Activated CD4-positive, alpha-beta T cell treated with anti-CD3 and anti-CD28 coated beads, Interleukin-2, amount 10 ng/mL, durations not matched to agents 24 days and 14 days (primary cell): ENCODE measurements at regions of chr4 and their contacts with region 1.

Region 1: GRCh38 chr4:98995183-98996055 is at the start of gene METAP1:
- DNase-seq: peak; percentile 98
- H3K4me3 Mint-ChIP-seq: peak within 1 kb of the TSS; percentile 89
- H3K27ac Mint-ChIP-seq: peak within 1 kb of the TSS; percentile 98
- H3K4me1 Mint-ChIP-seq: peaks cover 32% of the 10 kb centered on the region
- H3K27me3 Mint-ChIP-seq: peaks cover 3% of the 10 kb centered on the region
- total RNA-seq, gene METAP1: 61.2 and 63.3 TPM in 2 replicates

Region 2: DNA sequence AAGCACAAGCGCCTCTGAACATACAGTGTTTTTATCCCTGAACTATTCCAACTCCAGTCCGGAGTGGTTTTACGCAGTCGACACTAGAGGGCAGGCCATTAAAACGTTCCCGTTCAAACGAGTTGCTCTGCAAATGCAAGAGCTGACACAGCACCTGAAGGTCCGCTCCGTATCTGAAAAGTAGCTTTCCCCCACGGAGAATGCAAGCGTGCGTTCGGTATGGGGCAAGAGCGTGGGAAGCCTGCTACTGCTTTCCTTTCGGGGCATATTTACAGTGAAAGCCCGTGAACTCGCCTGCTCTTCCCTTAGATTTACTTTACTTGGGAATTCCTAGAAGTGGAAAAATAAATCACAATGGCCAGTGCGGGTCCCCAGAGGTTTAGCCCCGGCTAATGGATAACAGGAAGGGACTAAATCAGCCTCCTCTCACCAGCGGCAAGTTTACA is 527.8 kb before region 1 on chr4:
- intact Hi-C with region 1: loop called (anchors 1 kb)
- DNase-seq: peak; percentile 92
- H3K4me3 Mint-ChIP-seq: peak overlapping the region; percentile 79
- H3K27ac Mint-ChIP-seq: peak overlapping the region; percentile 38
- H3K4me1 Mint-ChIP-seq: peaks cover 33% of the 10 kb centered on the region
- H3K27me3 Mint-ChIP-seq: no peaks in the 10 kb centered on the region

Region 3: DNA sequence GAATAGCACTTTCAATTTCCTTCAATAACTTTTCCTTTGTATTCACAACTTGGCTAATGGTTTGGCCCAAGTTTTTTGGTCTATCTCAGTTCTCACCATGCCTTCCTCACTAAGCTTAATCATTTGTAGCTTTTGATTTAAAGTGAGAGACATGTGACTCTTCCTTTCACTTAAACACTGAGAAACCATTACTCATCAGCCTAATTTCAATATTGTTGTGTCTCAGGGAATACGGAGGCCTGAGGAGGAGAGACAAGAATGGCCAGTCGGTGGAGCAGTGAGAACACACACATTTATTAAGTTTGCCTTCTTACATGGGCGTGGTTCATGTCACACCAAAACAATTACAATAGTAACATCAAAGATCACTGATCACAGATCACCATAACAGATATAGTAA is 393.7 kb before region 1 on chr4:
- intact Hi-C with region 1: loop called (anchors 2 kb)
- DNase-seq: no peak
- H3K4me3 Mint-ChIP-seq: peak overlapping the region; percentile 72
- H3K27ac Mint-ChIP-seq: peak overlapping the region; percentile 95
- H3K4me1 Mint-ChIP-seq: peaks cover 54% of the 10 kb centered on the region
- H3K27me3 Mint-ChIP-seq: no peaks in the 10 kb centered on the region

Region 4: GRCh38 chr4:98745366-98745765 is 250.1 kb before region 1 on chr4:
- intact Hi-C with region 1: no loop called
- DNase-seq: no peak
- H3K4me3 Mint-ChIP-seq: no peak overlapping the region
- H3K27ac Mint-ChIP-seq: no peak overlapping the region
- H3K4me1 Mint-ChIP-seq: no peaks in the 10 kb centered on the region
- H3K27me3 Mint-ChIP-seq: no peaks in the 10 kb centered on the region

Region 5: DNA sequence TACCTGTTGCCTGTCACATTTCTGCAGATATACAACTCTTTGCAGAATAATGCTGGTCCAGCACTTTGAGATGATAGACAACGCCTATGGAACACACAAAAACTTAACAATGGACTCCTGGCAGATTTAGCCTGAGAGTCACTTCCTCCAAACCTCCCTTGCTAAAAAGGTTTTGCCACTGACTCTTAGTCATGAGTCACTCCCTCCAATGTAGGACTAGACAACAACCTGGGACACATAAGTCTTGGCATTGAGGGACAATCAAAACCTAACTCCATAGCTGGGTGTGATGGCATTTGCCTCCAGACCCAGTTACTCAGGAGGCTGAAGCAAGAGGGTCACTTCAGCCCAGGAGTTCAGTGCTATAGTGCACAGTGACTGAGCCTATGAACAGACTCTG is 44.5 kb before region 1 on chr4:
- intact Hi-C with region 1: no loop called
- DNase-seq: no peak
- H3K4me3 Mint-ChIP-seq: no peak overlapping the region
- H3K27ac Mint-ChIP-seq: no peak overlapping the region
- H3K4me1 Mint-ChIP-seq: no peaks in the 10 kb centered on the region
- H3K27me3 Mint-ChIP-seq: peaks cover 8% of the 10 kb centered on the region

Region 6: DNA sequence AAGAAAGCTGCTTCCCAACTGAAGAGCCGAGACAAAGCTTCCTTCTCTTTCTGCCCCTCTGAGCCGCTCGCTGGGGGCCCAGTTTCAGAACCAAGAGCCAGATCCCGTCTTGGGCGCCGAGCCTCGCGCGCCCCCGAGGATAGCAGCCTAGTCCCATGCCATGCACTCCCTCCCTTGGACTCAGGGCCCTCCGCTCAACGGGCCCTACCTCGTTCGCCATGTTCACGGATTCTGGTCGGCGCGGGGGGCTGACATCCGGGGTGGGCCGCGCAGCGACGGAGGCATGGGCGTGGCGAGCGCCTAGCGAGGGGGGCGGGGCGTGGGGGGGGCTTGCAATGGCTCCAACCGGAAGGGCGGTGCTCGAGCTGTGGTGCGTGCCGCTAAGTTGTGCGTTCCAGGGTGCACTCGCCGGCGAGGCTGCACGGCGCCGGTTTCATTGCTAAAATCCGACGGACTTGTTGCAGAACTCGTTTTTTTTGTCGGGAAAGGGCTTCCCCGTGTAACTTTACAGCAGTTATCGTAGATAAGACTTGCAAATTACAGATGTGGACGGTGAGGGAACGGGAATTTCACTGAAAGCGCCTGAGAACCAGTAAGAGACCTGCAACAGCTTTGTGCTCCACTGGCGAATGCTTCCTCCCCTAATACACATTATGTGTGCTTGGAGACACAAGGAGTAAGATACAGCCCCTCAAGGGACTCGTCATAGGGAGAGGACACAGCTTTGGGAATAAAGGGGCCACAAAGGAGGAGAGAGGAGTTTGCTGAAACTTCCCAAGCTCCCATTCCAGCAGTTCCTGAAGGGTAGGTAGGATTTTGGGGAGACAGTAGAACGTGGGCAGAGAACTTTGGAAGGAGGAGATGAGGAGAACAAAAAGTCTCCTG is 93.3 kb after region 1 on chr4 and contains the start of gene ADH5:
- intact Hi-C with region 1: loop called (anchors 1 kb)
- DNase-seq: peak; percentile 95
- H3K4me3 Mint-ChIP-seq: peak within 1 kb of the TSS; percentile 90
- H3K27ac Mint-ChIP-seq: peak within 1 kb of the TSS; percentile 96
- H3K4me1 Mint-ChIP-seq: peaks cover 35% of the 10 kb centered on the region
- H3K27me3 Mint-ChIP-seq: peaks cover 1% of the 10 kb centered on the region
- total RNA-seq, gene ADH5: 82.6 and 85.3 TPM in 2 replicates

Region 7: DNA sequence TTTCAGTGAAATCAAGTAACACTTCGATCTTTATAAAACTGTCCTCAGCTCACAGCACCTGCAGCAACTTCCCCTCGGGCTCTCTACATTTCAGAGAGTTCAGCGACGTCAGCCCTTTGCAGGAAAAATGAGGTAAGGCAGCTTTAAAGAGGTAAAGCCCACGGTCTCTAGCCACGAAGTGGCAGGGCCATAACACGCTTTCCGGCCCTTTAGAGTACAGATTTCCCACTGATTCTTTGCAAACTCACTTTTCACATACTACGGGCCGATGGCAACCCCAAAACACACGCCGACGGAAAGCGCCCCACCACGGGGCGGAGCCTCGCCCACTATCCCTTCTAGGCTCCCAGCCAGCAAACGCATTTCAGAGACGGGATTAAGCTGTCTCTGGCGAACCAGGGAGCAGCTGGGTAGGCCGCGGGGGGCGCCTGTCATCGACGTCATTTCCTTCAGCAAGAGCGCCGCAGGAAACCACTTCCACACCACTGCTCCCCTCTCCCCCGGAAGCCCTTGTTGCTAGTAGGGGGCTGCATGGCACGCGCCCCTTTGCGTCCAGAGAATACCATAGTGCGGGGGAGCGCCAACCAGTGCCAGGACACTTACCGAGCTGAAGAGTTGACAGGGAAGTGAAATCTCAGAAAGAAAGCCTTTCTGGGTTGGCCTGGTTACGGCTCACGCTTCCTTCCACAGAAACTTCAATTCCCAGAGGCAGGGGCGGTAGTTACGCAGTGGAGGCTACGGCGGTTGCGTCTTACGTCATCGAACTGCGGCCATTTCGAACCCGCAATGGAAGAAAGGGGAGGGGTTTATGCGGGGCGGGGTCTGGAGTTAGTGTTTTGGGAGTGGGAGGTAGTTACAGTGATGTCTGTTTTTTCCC is 568.1 kb after region 1 on chr4 and contains the start of gene TRMT10A:
- intact Hi-C with region 1: loop called (anchors 5 kb)
- DNase-seq: peak; percentile 97
- H3K4me3 Mint-ChIP-seq: peak within 1 kb of the TSS; percentile 97
- H3K27ac Mint-ChIP-seq: peak within 1 kb of the TSS; percentile 99
- H3K4me1 Mint-ChIP-seq: peaks cover 16% of the 10 kb centered on the region
- H3K27me3 Mint-ChIP-seq: peaks cover 13% of the 10 kb centered on the region
- total RNA-seq, gene TRMT10A: 7.4 and 8.6 TPM in 2 replicates